Naive thymus-derived CD4-positive, alpha-beta T cell (primary cell): ENCODE measurements at regions of chr13 and their contacts with region 1.

Region 1: GRCh38 chr13:28718543-28719226 is at the start of gene SLC46A3:
- DNase-seq: peak; percentile 94 to 97 (median 96)
- ATAC-seq: peak; percentile 99
- H3K4me3 ChIP-seq: peak within 1 kb of the TSS; percentile 81
- H3K4me3 Mint-ChIP-seq: peak within 1 kb of the TSS; percentile 89 to 97 (median 95)
- H3K27ac ChIP-seq: peak within 1 kb of the TSS; percentile 78
- H3K27ac Mint-ChIP-seq: peak within 1 kb of the TSS; percentile 90 to 97 (median 95)
- H3K4me1 ChIP-seq: peaks cover 11 to 14% of the 10 kb centered on the region in 2 donors
- H3K4me1 Mint-ChIP-seq: peaks cover 27 to 48% (median 38%) of the 10 kb centered on the region in 7 donors
- H3K27me3 ChIP-seq: no peaks in the 10 kb centered on the region
- H3K27me3 Mint-ChIP-seq: peaks cover 0 to 10% (median 0%) of the 10 kb centered on the region in 5 donors
- total RNA-seq, gene SLC46A3: 11.1 to 23.6 (median 12.0) TPM

Region 2: GRCh38 chr13:27424246-27425157 is 1294.2 kb before region 1 on chr13 and contains the start of gene GTF3A:
- CTCF ChIA-PET with region 1: no interaction called
- POLR2A ChIA-PET with region 1: no interaction called
- intact Hi-C with region 1: loop called (anchors 5 to 10 kb)
- DNase-seq: peak; percentile 83 to 97 (median 93)
- ATAC-seq: peak; percentile 77
- H3K4me3 ChIP-seq: peak within 1 kb of the TSS; percentile 71
- H3K4me3 Mint-ChIP-seq: peak within 1 kb of the TSS; percentile 81 to 96 (median 92)
- H3K27ac ChIP-seq: peak within 1 kb of the TSS; percentile 86
- H3K27ac Mint-ChIP-seq: peak within 1 kb of the TSS; percentile 88 to 98 (median 95)
- H3K4me1 ChIP-seq: peaks cover 24 to 45% of the 10 kb centered on the region in 2 donors
- H3K4me1 Mint-ChIP-seq: peaks cover 27 to 47% (median 42%) of the 10 kb centered on the region in 7 donors
- H3K27me3 ChIP-seq: no peaks in the 10 kb centered on the region
- H3K27me3 Mint-ChIP-seq: no peaks in the 10 kb centered on the region
- total RNA-seq, gene GTF3A: 123 to 254 (median 206) TPM

Region 3: DNA sequence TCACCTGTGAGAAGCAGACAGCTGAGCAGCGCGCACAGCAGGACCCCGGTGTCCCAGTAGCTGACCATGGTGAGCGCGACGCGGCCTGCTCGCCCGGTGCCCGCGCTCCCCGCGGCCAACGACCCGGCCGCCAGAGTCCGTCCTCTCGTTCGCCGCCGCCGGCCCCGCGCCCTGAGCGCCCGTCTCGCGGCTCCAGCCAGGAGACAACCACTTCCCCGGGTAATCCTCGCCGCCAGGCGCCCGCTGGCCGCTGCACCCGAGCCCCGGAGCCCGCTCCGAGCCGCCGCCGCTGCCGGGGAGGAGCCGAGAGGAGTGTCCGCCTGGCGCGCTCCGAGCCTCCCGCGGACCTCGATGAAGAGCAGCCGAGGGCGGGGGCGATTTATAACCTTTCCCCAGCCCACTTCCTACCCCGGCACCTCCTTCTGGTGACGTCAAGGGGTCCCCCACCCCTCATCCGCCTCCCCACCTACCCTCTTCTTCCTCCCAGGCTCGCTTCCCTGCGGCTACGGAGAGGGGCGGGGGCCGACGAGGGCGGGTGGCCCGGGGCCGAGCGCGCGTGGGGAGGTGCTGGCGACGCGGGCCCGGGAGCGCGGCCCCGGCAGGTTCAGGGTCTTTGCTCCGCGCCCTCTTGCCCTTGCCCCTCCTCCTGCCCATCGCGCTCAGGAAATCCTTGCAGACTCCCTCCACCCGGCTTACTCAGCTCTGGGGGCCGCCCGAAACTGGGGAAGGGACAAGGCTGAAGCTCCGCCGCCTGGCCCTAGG is 223.7 kb before region 1 on chr13 and contains the start of gene FLT1:
- CTCF ChIA-PET with region 1: no interaction called
- POLR2A ChIA-PET with region 1: no interaction called
- intact Hi-C with region 1: loop called in 1 of 2 experiments (anchors 5 kb)
- DNase-seq: peak; percentile 27 to 65 (median 55)
- ATAC-seq: peak; percentile 39
- H3K4me3 ChIP-seq: peak within 1 kb of the TSS; percentile 44
- H3K4me3 Mint-ChIP-seq: peak within 1 kb of the TSS; percentile 23 to 85 (median 74)
- H3K27ac ChIP-seq: peak within 1 kb of the TSS; percentile 30
- H3K27ac Mint-ChIP-seq: peak within 1 kb of the TSS in 5 of 9 donors; percentile 28 to 76 (median 61)
- H3K4me1 ChIP-seq: peaks cover 0 to 13% of the 10 kb centered on the region in 2 donors
- H3K4me1 Mint-ChIP-seq: peaks cover 0 to 56% (median 37%) of the 10 kb centered on the region in 7 donors
- H3K27me3 ChIP-seq: no peaks in the 10 kb centered on the region
- H3K27me3 Mint-ChIP-seq: peaks cover 7 to 62% (median 52%) of the 10 kb centered on the region in 5 donors
- total RNA-seq, gene FLT1: 1.7 to 2.7 (median 2.3) TPM

Region 4: GRCh38 chr13:28679628-28680027 is 39.1 kb before region 1 on chr13:
- CTCF ChIA-PET with region 1: no interaction called
- POLR2A ChIA-PET with region 1: no interaction called
- intact Hi-C with region 1: loop called (anchors 5 kb)
- DNase-seq: no peak
- ATAC-seq: peak; percentile 45
- H3K4me3 ChIP-seq: no peak overlapping the region
- H3K4me3 Mint-ChIP-seq: no peak overlapping the region
- H3K27ac ChIP-seq: no peak overlapping the region
- H3K27ac Mint-ChIP-seq: peak overlapping the region in 4 of 9 donors; percentile 30 to 57 (median 49)
- H3K4me1 ChIP-seq: no peaks in the 10 kb centered on the region
- H3K4me1 Mint-ChIP-seq: peaks cover 0 to 2% (median 0%) of the 10 kb centered on the region in 7 donors
- H3K27me3 ChIP-seq: no peaks in the 10 kb centered on the region
- H3K27me3 Mint-ChIP-seq: no peaks in the 10 kb centered on the region

Region 5: DNA sequence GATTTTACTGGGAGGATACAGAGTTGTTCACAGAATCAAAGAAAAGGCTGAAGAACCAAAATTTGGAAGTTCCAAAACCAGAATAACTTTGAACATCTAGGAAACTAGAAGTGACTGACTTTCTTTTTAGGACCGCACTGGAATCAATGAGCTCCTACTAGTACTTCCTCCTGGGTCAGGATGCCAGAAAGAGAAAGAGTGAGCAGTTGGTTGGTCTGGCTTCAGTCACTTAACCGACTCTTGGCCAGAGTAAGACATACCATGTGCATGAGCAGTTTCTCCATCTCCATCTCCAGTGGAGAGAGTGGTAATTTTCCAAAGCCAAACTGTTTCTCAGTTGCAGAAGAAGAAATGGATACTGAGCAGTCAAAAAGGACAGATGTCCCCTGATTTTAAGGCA is 74.3 kb after region 1 on chr13:
- CTCF ChIA-PET with region 1: no interaction called
- POLR2A ChIA-PET with region 1: no interaction called
- intact Hi-C with region 1: loop called (anchors 1 to 2 kb)
- DNase-seq: no peak
- ATAC-seq: no peak
- H3K4me3 ChIP-seq: no peak overlapping the region
- H3K4me3 Mint-ChIP-seq: no peak overlapping the region
- H3K27ac ChIP-seq: no peak overlapping the region
- H3K27ac Mint-ChIP-seq: no peak overlapping the region
- H3K4me1 ChIP-seq: no peaks in the 10 kb centered on the region
- H3K4me1 Mint-ChIP-seq: peaks cover 0 to 6% (median 4%) of the 10 kb centered on the region in 7 donors
- H3K27me3 ChIP-seq: no peaks in the 10 kb centered on the region
- H3K27me3 Mint-ChIP-seq: peaks cover 16 to 42% (median 30%) of the 10 kb centered on the region in 5 donors